KBM-7 (cell line): ENCODE measurements at regions of chr1 and their contacts with region 1.

Region 1: GRCh38 chr1:156591432-156592157 is at the start of gene NAXE:
- DNase-seq: peak; percentile 75

Region 2: DNA sequence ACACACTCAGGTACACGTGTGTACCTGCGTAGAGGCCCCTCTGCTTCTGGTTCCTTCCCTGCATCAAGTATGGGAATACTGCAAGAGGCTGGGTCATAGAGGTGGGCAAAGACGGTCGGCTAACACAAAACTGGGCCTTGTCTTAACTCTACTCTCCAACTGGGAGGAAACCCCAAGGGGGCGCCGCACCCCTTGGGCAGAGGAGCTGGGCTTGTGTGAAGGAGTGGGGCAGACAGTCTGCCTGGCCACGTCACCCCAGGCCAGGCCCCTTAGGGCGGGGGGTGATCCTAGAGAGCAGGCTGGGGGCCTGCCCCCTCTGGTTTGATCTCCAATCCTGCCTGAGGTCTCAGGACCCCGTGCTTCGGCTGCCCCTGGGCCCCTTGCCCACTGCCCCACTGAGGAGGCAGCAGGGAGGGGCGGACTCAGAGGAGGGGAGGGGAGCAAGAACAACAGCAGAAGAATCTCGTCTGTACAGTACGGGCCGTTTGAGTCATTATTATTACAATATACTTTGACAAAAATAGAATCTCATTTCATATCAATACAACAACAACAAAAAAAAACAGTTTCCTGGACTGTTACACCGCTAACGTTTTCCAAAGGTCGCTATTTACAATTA is 125.7 kb before region 1 on chr1:
- in situ Hi-C with region 1: loop called (anchors 10 kb)
- DNase-seq: peak; percentile 32